HepG2 (cell line): ENCODE measurements at regions of chr18 and their contacts with region 1.

Region 1: GRCh38 chr18:6714010-6714409 is 15.5 kb upstream of the ARHGAP28 start:
- DNase-seq: no peak
- ATAC-seq: no peak
- H3K4me3 ChIP-seq: no peak overlapping the region
- H3K27ac ChIP-seq: no peak overlapping the region
- H3K4me1 ChIP-seq: no peaks in the 10 kb centered on the region
- H3K27me3 ChIP-seq: no peaks in the 10 kb centered on the region
- CTCF ChIP-seq: no peak
- EP300 ChIP-seq: no peak
- POLR2A ChIP-seq: no peak
- RAD21 ChIP-seq: no peak

Region 2: GRCh38 chr18:6659963-6660725 is 53.9 kb before region 1 on chr18:
- CTCF ChIA-PET with region 1: no interaction called
- POLR2A ChIA-PET with region 1: no interaction called
- in situ Hi-C with region 1: no loop called
- intact Hi-C with region 1: loop called (anchors 10 kb)
- DNase-seq: no peak
- ATAC-seq: no peak
- H3K4me3 ChIP-seq: no peak overlapping the region
- H3K27ac ChIP-seq: no peak overlapping the region
- H3K4me1 ChIP-seq: no peaks in the 10 kb centered on the region
- H3K27me3 ChIP-seq: peaks cover 0 to 8% of the 10 kb centered on the region in 2 experiments; a peak in 1 of 5 replicates
- CTCF ChIP-seq: no peak
- EP300 ChIP-seq: no peak
- POLR2A ChIP-seq: no peak
- RAD21 ChIP-seq: no peak